ENCODE measurements at regions of chr14 and their contacts with region 1.

Region 1: GRCh38 chr14:55579724-55580469 is at the start of gene KTN1:
- DNase-seq: peak; percentile 92
- ATAC-seq: peak; percentile 86
- H3K4me3 Mint-ChIP-seq: peak within 1 kb of the TSS; percentile 86
- H3K27ac Mint-ChIP-seq: peak within 1 kb of the TSS; percentile 91
- H3K4me1 Mint-ChIP-seq: peaks cover 44% of the 10 kb centered on the region
- H3K27me3 Mint-ChIP-seq: no peaks in the 10 kb centered on the region
- total RNA-seq, gene KTN1: 117 to 138 TPM

Region 2: DNA sequence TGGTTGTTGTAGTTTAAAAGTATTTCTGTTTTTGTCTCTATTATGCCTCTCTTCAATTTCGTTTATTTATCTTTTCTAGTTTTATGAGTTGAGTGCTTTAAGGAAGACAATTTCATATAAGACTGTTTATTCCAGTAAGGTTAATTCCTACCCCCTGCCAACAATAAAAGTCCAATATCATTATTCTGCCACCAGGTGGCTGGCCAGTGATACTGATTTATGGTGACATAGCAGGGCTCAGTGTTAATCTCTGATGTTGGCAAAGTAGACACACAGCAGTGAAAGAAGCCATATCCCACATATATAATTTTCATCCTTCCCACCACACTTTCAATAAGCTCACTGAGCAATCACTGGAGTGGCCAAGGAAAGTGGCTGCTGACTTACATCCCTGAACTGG is 1554.2 kb before region 1 on chr14:
- CTCF ChIA-PET with region 1: no interaction called
- POLR2A ChIA-PET with region 1: no interaction called
- intact Hi-C with region 1: no loop called
- DNase-seq: no peak
- ATAC-seq: no peak
- H3K4me3 Mint-ChIP-seq: no peak overlapping the region
- H3K27ac Mint-ChIP-seq: no peak overlapping the region
- H3K4me1 Mint-ChIP-seq: no peaks in the 10 kb centered on the region
- H3K27me3 Mint-ChIP-seq: no peaks in the 10 kb centered on the region

Region 3: GRCh38 chr14:55051426-55052268 is 528.2 kb before region 1 on chr14 and contains the start of gene MAPK1IP1L:
- CTCF ChIA-PET with region 1: no interaction called
- POLR2A ChIA-PET with region 1: no interaction called
- intact Hi-C with region 1: loop called in 1 of 2 experiments (anchors 1 kb)
- DNase-seq: peak; percentile 95
- ATAC-seq: peak; percentile 94
- H3K4me3 Mint-ChIP-seq: peak within 1 kb of the TSS; percentile 82
- H3K27ac Mint-ChIP-seq: peak within 1 kb of the TSS; percentile 96
- H3K4me1 Mint-ChIP-seq: peaks cover 33% of the 10 kb centered on the region
- H3K27me3 Mint-ChIP-seq: no peaks in the 10 kb centered on the region
- total RNA-seq, gene MAPK1IP1L: 98.6 to 180 TPM

Region 4: DNA sequence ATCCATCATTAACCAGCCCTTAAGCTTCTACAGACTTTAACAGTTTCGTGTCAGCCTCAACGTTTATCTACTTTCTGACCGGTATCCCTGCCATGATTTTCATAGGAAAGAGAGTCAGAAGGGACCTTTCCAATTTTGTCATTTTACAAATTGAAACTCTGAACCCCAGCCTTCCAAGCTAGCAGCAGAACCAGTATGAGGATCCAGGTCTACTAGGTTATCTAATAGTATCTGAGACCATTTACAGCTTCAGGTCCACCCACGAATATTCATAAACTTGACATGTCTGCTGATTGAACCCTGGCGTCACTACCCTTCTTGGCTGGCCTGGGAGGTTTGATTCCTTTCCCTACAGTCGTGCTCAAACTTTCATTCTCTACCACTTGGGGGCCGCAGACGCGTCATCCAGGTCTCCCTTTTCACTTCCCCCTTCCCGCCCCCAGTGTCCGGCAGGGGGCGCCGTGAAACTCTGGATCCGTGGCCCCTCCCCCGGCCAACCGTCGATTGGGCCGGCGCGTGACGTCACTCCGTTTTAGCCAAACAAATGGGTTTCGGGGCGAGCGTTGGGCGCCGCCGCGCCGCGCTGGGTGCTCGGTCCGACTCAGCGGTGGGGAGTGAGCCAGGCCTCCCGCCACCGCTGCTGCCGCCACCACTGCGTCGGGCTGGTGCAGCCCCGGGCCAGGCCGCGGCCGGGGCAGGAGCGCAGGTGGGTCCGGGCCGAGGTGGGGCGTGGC is 308.9 kb before region 1 on chr14 and contains the start of gene FBXO34:
- CTCF ChIA-PET with region 1: interaction called, 5 read pairs
- POLR2A ChIA-PET with region 1: no interaction called
- intact Hi-C with region 1: loop called (anchors 2 to 5 kb)
- DNase-seq: peak; percentile 100
- ATAC-seq: peak; percentile 89
- H3K4me3 Mint-ChIP-seq: peak within 1 kb of the TSS; percentile 87
- H3K27ac Mint-ChIP-seq: peak within 1 kb of the TSS; percentile 93
- H3K4me1 Mint-ChIP-seq: peaks cover 39% of the 10 kb centered on the region
- H3K27me3 Mint-ChIP-seq: no peaks in the 10 kb centered on the region
- total RNA-seq, gene FBXO34: 18.5 to 18.9 TPM

Region 5: GRCh38 chr14:55446218-55446654 is 133.7 kb before region 1 on chr14:
- CTCF ChIA-PET with region 1: interaction called, 4 read pairs
- POLR2A ChIA-PET with region 1: no interaction called
- intact Hi-C with region 1: loop called (anchors 1 to 5 kb)
- DNase-seq: peak; percentile 73
- ATAC-seq: peak; percentile 51
- H3K4me3 Mint-ChIP-seq: no peak overlapping the region
- H3K27ac Mint-ChIP-seq: no peak overlapping the region
- H3K4me1 Mint-ChIP-seq: peaks cover 25% of the 10 kb centered on the region
- H3K27me3 Mint-ChIP-seq: no peaks in the 10 kb centered on the region

Region 6: GRCh38 chr14:56117765-56118610 is 538.1 kb after region 1 on chr14 and contains the start of gene PELI2:
- CTCF ChIA-PET with region 1: no interaction called
- POLR2A ChIA-PET with region 1: no interaction called
- intact Hi-C with region 1: loop called (anchors 2 to 10 kb)
- DNase-seq: peak; percentile 85
- ATAC-seq: peak; percentile 79
- H3K4me3 Mint-ChIP-seq: peak within 1 kb of the TSS; percentile 81
- H3K27ac Mint-ChIP-seq: peak within 1 kb of the TSS; percentile 56
- H3K4me1 Mint-ChIP-seq: peaks cover 38% of the 10 kb centered on the region
- H3K27me3 Mint-ChIP-seq: peaks cover 22% of the 10 kb centered on the region
- total RNA-seq, gene PELI2: 2.2 to 3.8 TPM

Region 7: GRCh38 chr14:57268161-57269069 is 1688.5 kb after region 1 on chr14 and contains the starts of genes AP5M1 and EXOC5:
- CTCF ChIA-PET with region 1: no interaction called
- POLR2A ChIA-PET with region 1: no interaction called
- intact Hi-C with region 1: loop called in 1 of 2 experiments (anchors 2 kb)
- DNase-seq: peak; percentile 96
- ATAC-seq: peak; percentile 93
- H3K4me3 Mint-ChIP-seq: peak within 1 kb of the TSS; percentile 90
- H3K27ac Mint-ChIP-seq: peak within 1 kb of the TSS; percentile 99
- H3K4me1 Mint-ChIP-seq: peaks cover 53% of the 10 kb centered on the region
- H3K27me3 Mint-ChIP-seq: no peaks in the 10 kb centered on the region
- total RNA-seq, gene AP5M1: 30.8 to 32.7 TPM
- total RNA-seq, gene EXOC5: 66.5 to 80.2 TPM